Left colon (tissue), 2 donors: ENCODE measurements at regions of chr3 and their contacts with region 1.

Region 1: GRCh38 chr3:33372218-33373081 is 67.8 kb downstream of the UBP1 start:
- DNase-seq: peak in 1 of 2 donors; percentile 55
- ATAC-seq: peak; percentile 74

Region 2: GRCh38 chr3:33131331-33132018 is 241.0 kb before region 1 on chr3:
- intact Hi-C with region 1: loop called (anchors 5 kb)
- DNase-seq: peak in 1 of 2 donors; percentile 34
- ATAC-seq: peak; percentile 73

Region 3: DNA sequence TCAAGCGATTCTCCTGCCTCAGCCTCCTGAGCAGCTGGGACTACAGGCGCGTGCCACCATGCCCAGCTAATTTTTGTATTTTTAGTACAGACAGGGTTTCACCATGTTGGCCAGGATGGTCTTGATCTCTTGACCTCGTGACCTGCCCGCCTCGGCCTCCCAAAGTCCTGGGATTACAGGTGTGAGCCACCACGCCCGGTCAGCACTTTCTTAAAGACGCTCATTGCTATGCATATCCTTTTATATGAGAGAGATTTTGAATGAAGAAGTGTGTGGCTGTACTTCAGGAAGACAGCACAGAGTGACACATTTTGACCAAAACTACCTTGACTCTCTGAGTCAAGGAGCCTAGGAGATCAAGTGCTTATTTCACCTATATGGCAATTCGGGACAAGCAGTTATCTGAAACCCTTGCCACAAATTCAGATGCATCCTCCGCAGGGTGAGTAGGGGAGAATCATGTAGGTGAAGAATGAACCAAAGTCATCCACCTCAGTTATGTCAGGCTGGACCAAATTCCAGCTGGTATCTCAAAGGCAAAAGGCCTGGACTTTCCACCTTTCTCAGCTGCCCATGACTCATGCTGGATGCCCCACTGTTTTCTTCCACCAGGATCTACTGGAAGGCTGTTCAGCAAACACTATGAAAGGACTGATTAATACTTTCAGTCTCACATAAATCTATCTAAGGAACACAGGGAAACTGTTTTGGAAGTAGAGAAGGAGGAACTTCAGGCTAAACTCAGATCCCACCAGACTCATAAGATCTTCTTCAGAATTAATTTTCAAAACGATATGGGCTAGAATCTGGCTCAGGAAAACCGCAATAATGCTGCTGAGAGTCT is 185.7 kb before region 1 on chr3:
- intact Hi-C with region 1: no loop called
- DNase-seq: no peak
- ATAC-seq: no peak